H1 (cell line): ENCODE measurements at regions of chr2 and their contacts with region 1.

Region 1: GRCh38 chr2:177332041-177332991 is 60.3 kb upstream of the AGPS start:
- DNase-seq: no peak
- H3K4me3 ChIP-seq: peak overlapping the region in 1 of 4 experiments; percentile 31; a peak in 1 of 8 replicates
- H3K27ac ChIP-seq: no peak overlapping the region
- H3K4me1 ChIP-seq: peaks cover 0 to 7% (median 3%) of the 10 kb centered on the region in 4 experiments; a peak in 3 of 7 replicates
- H3K27me3 ChIP-seq: no peaks in the 10 kb centered on the region
- CTCF ChIP-seq: peak in 2 of 3 experiments; percentile 62 to 70; a peak in 3 of 4 replicates
- EP300 ChIP-seq: peak in 1 of 2 experiments; percentile 63; a peak in 1 of 3 replicates
- POLR2A ChIP-seq: no peak
- RAD21 ChIP-seq: peak; percentile 82 to 83

Region 2: GRCh38 chr2:177275041-177276020 is 57.0 kb before region 1 on chr2:
- CTCF ChIA-PET with region 1: interaction called, 13 read pairs
- POLR2A ChIA-PET with region 1: no interaction called
- DNase-seq: no peak
- H3K4me3 ChIP-seq: no peak overlapping the region
- H3K27ac ChIP-seq: no peak overlapping the region
- H3K4me1 ChIP-seq: no peaks in the 10 kb centered on the region
- H3K27me3 ChIP-seq: no peaks in the 10 kb centered on the region
- CTCF ChIP-seq: no peak
- EP300 ChIP-seq: no peak
- POLR2A ChIP-seq: no peak
- RAD21 ChIP-seq: no peak

Region 3: DNA sequence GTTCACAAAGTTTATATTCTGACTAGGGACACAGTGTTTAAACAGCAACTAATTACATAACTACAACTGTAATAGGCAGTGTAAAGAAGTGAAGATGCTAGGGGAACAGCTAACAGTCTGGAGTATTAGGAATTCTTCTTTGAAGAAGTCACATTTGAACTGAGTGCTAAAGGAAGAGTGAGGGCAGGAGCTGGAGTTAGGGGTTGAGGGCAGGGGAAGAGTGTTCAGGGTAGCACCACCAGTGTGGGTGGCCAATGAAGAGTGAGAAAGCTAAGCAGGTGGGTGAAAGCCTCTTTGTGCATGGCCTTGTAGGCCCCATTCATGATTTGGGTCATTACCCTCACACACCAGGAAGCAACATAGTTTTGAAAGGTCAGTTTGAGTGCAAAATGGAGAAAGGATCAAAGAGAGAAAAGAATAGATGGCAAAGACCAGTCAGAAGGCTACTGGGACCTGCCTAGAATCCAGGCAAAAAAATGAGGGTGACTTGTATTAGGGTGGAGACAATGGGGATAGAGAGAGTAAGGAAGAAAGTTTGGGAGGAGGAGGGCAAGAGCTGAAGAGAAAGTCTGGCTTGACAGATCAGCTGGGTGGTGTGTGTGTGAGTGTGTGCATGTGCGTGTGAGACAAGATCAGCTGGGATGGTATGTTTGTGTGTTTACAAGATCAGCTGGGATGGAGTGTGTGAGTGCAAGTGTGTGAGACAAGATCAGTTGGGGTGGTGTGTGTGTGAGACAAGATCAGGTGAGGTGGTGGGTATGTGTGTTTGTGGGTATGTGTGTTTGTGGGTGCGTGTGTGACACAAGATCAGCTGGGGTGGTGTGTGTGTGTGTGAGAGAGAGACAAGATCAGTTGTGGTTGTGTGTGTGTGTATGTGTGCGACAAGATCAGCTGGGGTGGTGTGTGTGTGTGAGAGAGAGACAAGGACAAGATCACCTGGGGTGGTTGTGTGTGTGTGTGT is 16.7 kb after region 1 on chr2:
- CTCF ChIA-PET with region 1: interaction called, 16 read pairs
- POLR2A ChIA-PET with region 1: interaction called, 3 read pairs
- DNase-seq: no peak
- H3K4me3 ChIP-seq: no peak overlapping the region
- H3K27ac ChIP-seq: no peak overlapping the region
- H3K4me1 ChIP-seq: no peaks in the 10 kb centered on the region
- H3K27me3 ChIP-seq: no peaks in the 10 kb centered on the region
- CTCF ChIP-seq: no peak
- EP300 ChIP-seq: no peak
- POLR2A ChIP-seq: no peak
- RAD21 ChIP-seq: no peak

Region 4: DNA sequence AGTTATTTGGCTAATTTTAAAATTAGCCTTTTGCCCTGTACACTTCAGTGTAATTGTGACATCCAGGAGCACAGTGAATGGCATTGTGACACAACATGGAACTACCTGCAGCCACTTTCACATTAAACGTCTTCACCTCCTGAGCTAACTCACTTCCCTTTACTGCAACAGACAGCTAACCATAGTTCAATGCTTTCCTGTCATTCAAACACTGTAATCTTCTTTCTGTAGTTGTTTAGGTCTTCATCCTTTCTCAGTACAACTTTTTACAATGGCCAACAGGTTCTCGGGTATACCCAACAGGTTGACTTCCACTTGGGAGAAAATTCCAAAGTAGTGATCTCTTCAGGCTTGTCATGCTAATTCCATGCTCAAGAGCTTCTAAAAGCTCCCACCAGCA is 51.6 kb after region 1 on chr2:
- CTCF ChIA-PET with region 1: interaction called, 11 read pairs
- POLR2A ChIA-PET with region 1: no interaction called
- DNase-seq: no peak
- H3K4me3 ChIP-seq: no peak overlapping the region
- H3K27ac ChIP-seq: no peak overlapping the region
- H3K4me1 ChIP-seq: peaks cover 0 to 4% (median 2%) of the 10 kb centered on the region in 4 experiments; a peak in 2 of 7 replicates
- H3K27me3 ChIP-seq: no peaks in the 10 kb centered on the region
- CTCF ChIP-seq: no peak
- EP300 ChIP-seq: no peak
- POLR2A ChIP-seq: no peak
- RAD21 ChIP-seq: no peak

Region 5: GRCh38 chr2:177445200-177445599 is 112.9 kb after region 1 on chr2:
- CTCF ChIA-PET with region 1: no interaction called
- POLR2A ChIA-PET with region 1: no interaction called
- DNase-seq: no peak
- H3K4me3 ChIP-seq: no peak overlapping the region
- H3K27ac ChIP-seq: no peak overlapping the region
- H3K4me1 ChIP-seq: no peaks in the 10 kb centered on the region
- H3K27me3 ChIP-seq: no peaks in the 10 kb centered on the region
- CTCF ChIP-seq: no peak
- EP300 ChIP-seq: no peak
- POLR2A ChIP-seq: no peak
- RAD21 ChIP-seq: no peak

Region 6: GRCh38 chr2:177572236-177572671 is 239.9 kb after region 1 on chr2:
- CTCF ChIA-PET with region 1: no interaction called
- POLR2A ChIA-PET with region 1: no interaction called
- DNase-seq: no peak
- H3K4me3 ChIP-seq: no peak overlapping the region
- H3K27ac ChIP-seq: no peak overlapping the region
- H3K4me1 ChIP-seq: no peaks in the 10 kb centered on the region
- H3K27me3 ChIP-seq: no peaks in the 10 kb centered on the region
- CTCF ChIP-seq: no peak
- EP300 ChIP-seq: no peak
- POLR2A ChIP-seq: no peak
- RAD21 ChIP-seq: no peak

Region 7: GRCh38 chr2:177724398-177725287 is 392.3 kb after region 1 on chr2:
- CTCF ChIA-PET with region 1: interaction called, 16 read pairs
- POLR2A ChIA-PET with region 1: no interaction called
- DNase-seq: peak; percentile 13 to 78
- H3K4me3 ChIP-seq: no peak overlapping the region
- H3K27ac ChIP-seq: no peak overlapping the region
- H3K4me1 ChIP-seq: no peaks in the 10 kb centered on the region; a peak in 1 of 7 replicates
- H3K27me3 ChIP-seq: peaks cover 9 to 28% (median 19%) of the 10 kb centered on the region in 4 experiments
- CTCF ChIP-seq: peak; percentile 54 to 94 (median 83)
- EP300 ChIP-seq: no peak
- POLR2A ChIP-seq: no peak
- RAD21 ChIP-seq: peak; percentile 96